Psoas muscle (tissue), 8 donors: ENCODE measurements at regions of chr1 and their contacts with region 1.

Region 1: DNA sequence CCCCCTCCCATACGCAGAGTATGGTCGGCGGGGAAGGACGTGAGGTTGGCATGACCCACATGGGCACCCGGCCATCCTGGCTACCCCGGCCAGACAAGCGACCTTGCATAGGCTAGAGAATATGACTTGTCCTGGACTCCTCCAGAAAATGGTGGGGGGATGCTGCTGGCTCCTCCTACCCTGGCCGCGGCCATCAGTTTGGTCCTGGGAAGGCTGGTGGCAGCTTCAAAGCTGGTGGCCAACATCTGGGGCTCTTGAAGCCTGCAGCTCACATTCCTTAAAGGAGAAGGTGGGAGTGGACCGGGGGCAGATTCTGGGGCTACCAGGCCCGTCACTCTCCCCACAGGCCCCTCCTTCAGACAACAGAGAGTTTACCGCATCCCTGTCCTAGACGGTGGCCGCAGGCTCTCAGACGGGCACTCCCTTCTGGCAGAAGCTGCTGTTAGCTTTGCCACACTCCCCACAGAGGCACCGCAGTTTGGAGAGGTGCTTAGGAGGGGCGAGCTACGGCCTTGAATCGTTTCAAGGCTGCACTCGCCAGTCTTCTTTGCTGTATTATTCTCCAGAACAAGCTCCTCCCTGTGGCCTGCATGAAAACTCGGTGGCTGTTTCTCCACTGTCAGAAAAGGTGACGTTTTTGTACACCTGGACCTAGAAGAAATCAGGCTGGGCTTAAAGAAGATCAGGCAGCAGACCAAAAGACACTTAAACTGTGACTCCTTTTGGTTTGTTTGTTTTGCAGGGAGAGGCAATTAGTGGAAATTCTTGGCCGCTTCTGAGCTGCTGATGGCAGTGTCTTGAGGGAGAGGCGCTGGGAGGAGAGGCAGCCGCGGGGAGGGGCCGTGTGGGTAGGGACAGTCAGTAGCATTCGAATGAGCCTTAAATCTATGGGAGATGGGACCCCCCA is 68.0 kb downstream of the RUNX3 start:
- DNase-seq: no peak
- ATAC-seq: no peak
- H3K4me3 ChIP-seq: no peak overlapping the region
- H3K27ac ChIP-seq: no peak overlapping the region
- H3K4me1 ChIP-seq: no peaks in the 10 kb centered on the region
- H3K27me3 ChIP-seq: peaks cover 0 to 30% (median 2%) of the 10 kb centered on the region in 3 donors
- CTCF ChIP-seq: no peak

Region 2: DNA sequence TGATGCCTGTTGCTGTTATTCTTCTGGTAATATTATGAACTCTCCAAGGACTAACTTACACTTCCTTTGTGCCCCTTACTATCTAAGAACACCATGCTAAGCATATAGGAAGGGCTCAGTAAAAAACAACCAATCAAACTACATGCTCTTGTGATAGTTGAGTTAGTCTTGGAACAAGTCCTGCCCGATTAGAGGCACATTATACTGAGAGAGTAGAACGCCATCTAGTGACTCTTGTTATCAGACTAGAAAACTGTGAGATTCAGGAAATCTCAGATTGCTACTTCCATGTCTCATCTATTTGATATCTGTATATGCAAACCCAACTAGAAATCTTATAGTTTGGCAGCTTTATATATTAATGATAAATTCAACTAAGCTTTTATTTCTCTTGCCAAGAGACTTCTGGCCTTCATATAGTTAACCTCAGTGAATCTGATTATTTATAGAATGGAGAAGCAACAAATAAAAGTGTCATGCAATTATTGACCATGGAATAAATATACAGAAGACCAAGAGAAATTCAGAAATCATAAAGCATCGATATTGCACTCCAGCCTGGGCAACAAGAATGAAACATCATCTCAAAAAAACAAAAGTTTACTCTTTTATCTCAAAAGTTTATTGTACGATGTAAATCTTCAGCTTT is 226.8 kb before region 1 on chr1:
- intact Hi-C with region 1: no loop called
- DNase-seq: no peak
- ATAC-seq: peak; percentile 42 to 68 (median 54)
- H3K4me3 ChIP-seq: no peak overlapping the region
- H3K27ac ChIP-seq: no peak overlapping the region
- H3K4me1 ChIP-seq: no peaks in the 10 kb centered on the region
- H3K27me3 ChIP-seq: peaks cover 0 to 5% (median 0%) of the 10 kb centered on the region in 3 donors
- CTCF ChIP-seq: peak; percentile 50

Region 3: DNA sequence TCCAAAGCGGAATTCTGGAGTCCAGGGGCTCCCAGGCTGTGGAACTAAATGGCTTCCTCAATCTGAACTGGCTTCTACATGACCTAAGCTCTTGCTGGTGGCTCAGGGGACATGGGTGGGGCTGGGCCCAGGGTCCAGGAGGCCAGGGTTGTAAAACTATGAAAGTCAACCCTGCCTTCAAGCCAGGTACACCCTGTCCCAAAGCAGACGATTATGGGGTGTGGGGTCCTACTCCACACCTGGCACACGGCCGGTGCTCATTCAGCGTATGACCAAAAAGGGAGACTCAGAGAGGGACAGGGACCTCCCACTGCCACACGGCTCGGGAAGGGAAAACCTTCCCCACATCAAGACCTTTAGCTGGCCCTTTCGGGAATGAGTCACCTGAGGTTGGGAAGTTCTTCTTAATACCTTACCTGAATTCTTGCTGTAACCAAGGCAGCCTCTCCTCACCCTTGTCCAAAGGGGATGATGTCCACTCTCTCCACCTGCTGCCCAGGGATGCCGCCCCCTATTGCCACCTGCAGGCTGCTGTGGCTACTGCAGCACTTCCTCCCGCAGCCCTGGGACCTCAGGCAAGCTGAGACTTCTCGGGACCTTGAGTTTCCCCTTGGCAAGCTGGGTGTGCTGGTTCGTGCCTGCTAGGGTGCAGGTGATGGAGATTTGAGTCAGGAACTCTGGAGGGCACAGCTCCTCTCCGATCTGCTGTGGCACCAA is 35.9 kb after region 1 on chr1:
- intact Hi-C with region 1: loop called in 1 of 2 experiments (anchors 1 kb)
- DNase-seq: no peak
- ATAC-seq: peak; percentile 51 to 76 (median 58)
- H3K4me3 ChIP-seq: no peak overlapping the region
- H3K27ac ChIP-seq: no peak overlapping the region
- H3K4me1 ChIP-seq: no peaks in the 10 kb centered on the region
- H3K27me3 ChIP-seq: peaks cover 0 to 11% (median 5%) of the 10 kb centered on the region in 3 donors
- CTCF ChIP-seq: peak; percentile 52